Activated CD4-positive, alpha-beta T cell treated with anti-CD3 and anti-CD28 coated beads for 36 hours (primary cell): ENCODE measurements at regions of chr2 and their contacts with region 1.

Region 1: GRCh38 chr2:147288131-147288530 is 556.7 kb upstream of the ACVR2A start:
- DNase-seq: peak; percentile 20
- ATAC-seq: peak; percentile 96
- H3K4me3 Mint-ChIP-seq: no peak overlapping the region
- H3K27ac Mint-ChIP-seq: peak overlapping the region; percentile 55
- H3K4me1 Mint-ChIP-seq: peaks cover 37% of the 10 kb centered on the region
- H3K27me3 Mint-ChIP-seq: no peaks in the 10 kb centered on the region

Region 2: DNA sequence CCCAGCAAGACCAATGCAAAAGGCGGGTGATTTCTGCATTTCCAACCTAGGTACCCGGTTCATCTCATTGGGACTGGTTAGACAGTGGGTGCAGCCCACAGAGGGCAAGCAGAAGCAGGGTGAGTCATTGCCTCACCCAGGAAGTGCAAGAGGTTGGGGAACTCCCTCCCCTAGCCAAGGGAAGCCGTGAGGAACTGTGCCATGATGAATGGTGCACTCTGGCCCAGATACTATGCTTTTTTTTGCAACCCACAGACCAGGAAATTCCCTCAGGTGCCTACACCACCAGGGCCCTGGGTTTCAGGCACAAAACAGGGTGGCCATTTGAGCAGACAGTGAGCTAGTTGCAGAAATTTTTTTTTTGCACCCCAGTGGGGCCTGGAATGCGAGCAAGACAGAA is 105.9 kb before region 1 on chr2:
- CTCF ChIA-PET with region 1: interaction called, 3 read pairs
- POLR2A ChIA-PET with region 1: no interaction called
- intact Hi-C with region 1: loop called in 1 of 2 experiments (anchors 1 kb)
- DNase-seq: peak; percentile 72
- ATAC-seq: peak; percentile 88
- H3K4me3 Mint-ChIP-seq: no peak overlapping the region
- H3K27ac Mint-ChIP-seq: peak overlapping the region; percentile 43
- H3K4me1 Mint-ChIP-seq: peaks cover 20% of the 10 kb centered on the region
- H3K27me3 Mint-ChIP-seq: peaks cover 9% of the 10 kb centered on the region

Region 3: DNA sequence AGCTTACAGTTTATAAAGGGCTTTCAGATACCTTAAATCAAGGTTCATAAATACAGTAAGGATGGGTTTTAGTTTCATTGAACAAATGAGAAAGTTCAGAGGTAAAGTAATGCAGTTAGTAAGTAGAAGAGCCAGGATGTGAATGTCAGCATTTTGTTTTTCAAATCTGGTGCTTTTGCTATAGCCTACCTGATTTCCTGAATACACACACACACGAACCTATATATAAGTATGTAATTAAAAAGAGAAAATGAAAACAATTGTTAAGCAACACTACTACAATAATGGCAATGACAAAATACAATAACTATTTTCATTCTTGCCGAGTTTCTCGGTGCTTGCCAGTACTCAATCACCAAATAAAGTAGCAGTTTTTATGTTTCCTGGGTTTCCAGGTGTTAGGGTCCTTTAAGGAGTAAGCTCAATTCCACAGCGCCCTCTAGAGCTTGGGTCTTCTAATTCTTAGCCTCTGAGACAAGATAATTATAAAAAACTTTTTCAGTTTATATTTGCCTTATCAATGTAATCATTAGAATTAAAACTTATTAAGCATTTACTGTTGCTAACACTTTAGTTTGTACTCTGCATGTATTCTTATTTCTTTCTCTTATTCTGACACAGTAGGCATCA is 43.8 kb after region 1 on chr2:
- CTCF ChIA-PET with region 1: no interaction called
- POLR2A ChIA-PET with region 1: no interaction called
- intact Hi-C with region 1: loop called in 1 of 2 experiments (anchors 2 kb)
- DNase-seq: peak; percentile 67
- ATAC-seq: peak; percentile 61
- H3K4me3 Mint-ChIP-seq: no peak overlapping the region
- H3K27ac Mint-ChIP-seq: no peak overlapping the region
- H3K4me1 Mint-ChIP-seq: peaks cover 12% of the 10 kb centered on the region
- H3K27me3 Mint-ChIP-seq: no peaks in the 10 kb centered on the region

Region 4: GRCh38 chr2:147405651-147406050 is 117.5 kb after region 1 on chr2:
- CTCF ChIA-PET with region 1: no interaction called
- POLR2A ChIA-PET with region 1: no interaction called
- intact Hi-C with region 1: no loop called
- DNase-seq: no peak
- ATAC-seq: no peak
- H3K4me3 Mint-ChIP-seq: no peak overlapping the region
- H3K27ac Mint-ChIP-seq: no peak overlapping the region
- H3K4me1 Mint-ChIP-seq: no peaks in the 10 kb centered on the region
- H3K27me3 Mint-ChIP-seq: peaks cover 3% of the 10 kb centered on the region